ENCODE measurements at regions of chr2 and their contacts with region 1.

Region 1: GRCh38 chr2:15206419-15206818 is 354.7 kb downstream of the NBAS start:
- DNase-seq: no peak
- ATAC-seq: no peak
- H3K4me3 ChIP-seq: no peak overlapping the region
- H3K27ac ChIP-seq: no peak overlapping the region
- H3K4me1 ChIP-seq: no peaks in the 10 kb centered on the region
- H3K27me3 ChIP-seq: no peaks in the 10 kb centered on the region
- CTCF ChIP-seq: no peak

Region 2: DNA sequence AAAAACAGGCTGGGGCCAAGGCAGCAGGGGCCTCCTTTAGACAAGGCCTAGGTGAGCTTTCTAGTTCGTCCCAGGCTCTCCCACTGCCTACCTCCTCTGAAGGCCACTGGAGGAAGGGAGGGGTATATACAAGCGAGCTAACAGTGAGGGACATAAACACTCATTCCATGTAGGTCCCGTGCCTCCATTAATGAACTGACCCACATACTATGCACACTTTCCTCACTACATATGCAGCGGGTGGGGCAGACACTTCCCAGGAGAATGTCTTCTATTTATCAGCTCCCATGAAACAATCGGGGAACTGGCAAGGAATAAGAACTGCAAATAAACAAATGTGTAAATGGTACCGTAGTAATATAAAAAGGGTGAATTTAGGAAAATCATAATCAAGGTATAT is 18.2 kb after region 1 on chr2:
- intact Hi-C with region 1: loop called in 1 of 2 experiments (anchors 1 kb)
- DNase-seq: no peak
- ATAC-seq: no peak
- H3K4me3 ChIP-seq: no peak overlapping the region
- H3K27ac ChIP-seq: no peak overlapping the region
- H3K4me1 ChIP-seq: no peaks in the 10 kb centered on the region
- H3K27me3 ChIP-seq: no peaks in the 10 kb centered on the region
- CTCF ChIP-seq: no peak